ENCODE measurements at regions of chr15 and their contacts with region 1.

Region 1: DNA sequence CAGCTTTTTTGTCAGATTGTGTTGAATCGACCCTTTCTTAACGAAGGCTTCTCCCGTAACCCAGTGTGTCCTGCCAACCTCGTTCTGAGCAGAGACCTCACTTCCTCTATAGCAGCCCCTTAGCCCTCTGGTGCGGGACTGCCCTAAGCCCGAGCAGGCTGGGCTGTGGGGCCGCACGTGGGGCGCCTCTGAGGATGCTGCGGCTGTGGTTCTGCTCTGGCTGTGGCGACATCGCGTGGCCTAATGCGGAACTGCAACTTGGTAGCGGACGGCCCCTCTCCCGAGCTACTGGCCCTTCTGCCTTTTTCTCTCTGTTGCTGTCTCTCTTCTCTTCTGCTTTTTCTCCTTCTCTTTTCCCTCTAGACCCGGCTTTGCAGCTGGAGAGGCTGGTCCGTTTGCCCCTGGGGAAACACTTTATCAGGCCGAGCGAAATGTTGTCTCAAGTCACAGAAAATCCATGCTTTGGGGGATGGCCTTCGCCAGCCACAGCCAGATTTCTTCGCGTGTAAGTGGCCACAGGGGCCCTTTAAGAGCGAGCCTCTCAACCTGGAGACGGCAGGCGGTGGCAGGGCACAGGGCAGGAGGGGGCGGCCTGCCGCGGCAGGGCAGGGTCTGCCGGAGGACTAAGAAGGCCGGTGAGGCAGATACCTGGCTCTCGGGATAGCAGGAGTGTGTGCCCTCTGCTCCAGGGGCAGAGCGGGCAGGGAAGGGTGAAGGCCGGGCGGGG is 19.4 kb upstream of the KIF23 start:
- DNase-seq: peak; percentile 70 to 84
- H3K4me3 ChIP-seq: no peak overlapping the region
- H3K27ac ChIP-seq: no peak overlapping the region
- H3K4me1 ChIP-seq: peaks cover 0 to 10% (median 5%) of the 10 kb centered on the region in 4 donors
- H3K27me3 ChIP-seq: no peaks in the 10 kb centered on the region
- CTCF ChIP-seq: peak; percentile 87 to 97

Region 2: DNA sequence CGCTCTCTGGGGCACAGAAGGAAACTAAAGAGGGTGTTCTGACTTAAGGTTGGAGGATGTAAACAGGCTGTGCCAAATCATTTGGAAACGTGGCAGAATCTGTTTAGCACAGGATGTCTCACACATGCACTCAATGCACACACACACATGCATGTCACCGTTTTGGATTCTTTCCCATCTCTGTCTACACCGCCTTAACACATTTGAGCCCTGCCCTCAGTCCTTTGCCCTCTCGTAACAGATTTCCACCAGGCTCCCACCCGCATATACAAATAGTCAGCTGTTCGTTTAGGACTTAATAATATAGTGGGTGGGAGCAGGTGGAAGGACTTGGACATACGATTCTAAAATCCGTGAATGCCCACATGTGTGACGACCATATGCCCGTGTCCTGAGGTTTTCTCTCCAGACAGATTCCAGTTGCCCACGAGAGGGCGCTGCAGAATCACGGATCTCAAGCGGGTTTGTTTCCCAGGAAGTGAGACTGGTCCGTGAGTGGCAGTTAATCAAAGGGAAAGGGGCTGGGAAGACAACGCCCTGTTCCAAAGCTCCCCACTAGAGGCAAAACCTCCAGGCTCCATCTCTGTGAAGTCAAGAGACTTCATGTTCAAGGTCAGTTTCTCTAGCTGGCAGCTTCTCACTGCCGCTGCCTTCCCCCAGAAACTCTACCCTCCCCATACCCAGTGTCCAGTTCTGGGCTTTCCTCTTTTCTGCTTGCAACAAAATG is 335.7 kb before region 1 on chr15:
- intact Hi-C with region 1: loop called (anchors 2 kb)
- DNase-seq: peak; percentile 81 to 87
- H3K4me3 ChIP-seq: no peak overlapping the region
- H3K27ac ChIP-seq: no peak overlapping the region
- H3K4me1 ChIP-seq: no peaks in the 10 kb centered on the region
- H3K27me3 ChIP-seq: peaks cover 0 to 26% of the 10 kb centered on the region in 2 donors
- CTCF ChIP-seq: peak; percentile 82 to 88

Region 3: DNA sequence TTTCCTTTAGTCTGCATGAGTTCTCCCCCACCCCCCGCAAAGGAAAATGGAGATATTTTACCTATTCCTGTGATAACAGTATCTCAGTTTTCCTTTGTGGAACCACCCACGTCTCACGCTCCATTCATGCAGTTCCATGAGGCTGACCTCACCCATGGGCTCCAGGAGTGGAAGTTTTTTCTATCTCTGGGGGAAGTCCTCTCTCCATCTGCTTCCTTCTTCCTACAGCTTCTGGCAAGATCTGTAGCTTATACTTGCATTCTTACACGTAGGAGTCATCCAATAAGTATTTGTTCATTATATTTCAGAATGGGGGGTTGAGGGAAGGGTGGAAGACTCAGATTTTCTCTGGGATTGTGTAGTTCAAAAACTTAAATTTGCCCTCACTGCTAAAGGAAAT is 240.0 kb before region 1 on chr15:
- intact Hi-C with region 1: loop called (anchors 10 kb)
- DNase-seq: no peak
- H3K4me3 ChIP-seq: no peak overlapping the region
- H3K27ac ChIP-seq: no peak overlapping the region
- H3K4me1 ChIP-seq: peaks cover 0 to 1% (median 0%) of the 10 kb centered on the region in 4 donors
- H3K27me3 ChIP-seq: peaks cover 0 to 10% of the 10 kb centered on the region in 2 donors
- CTCF ChIP-seq: no peak

Region 4: GRCh38 chr15:69337133-69337532 is 57.6 kb before region 1 on chr15:
- intact Hi-C with region 1: no loop called
- DNase-seq: no peak
- H3K4me3 ChIP-seq: no peak overlapping the region
- H3K27ac ChIP-seq: no peak overlapping the region
- H3K4me1 ChIP-seq: no peaks in the 10 kb centered on the region
- H3K27me3 ChIP-seq: no peaks in the 10 kb centered on the region
- CTCF ChIP-seq: no peak

Region 5: DNA sequence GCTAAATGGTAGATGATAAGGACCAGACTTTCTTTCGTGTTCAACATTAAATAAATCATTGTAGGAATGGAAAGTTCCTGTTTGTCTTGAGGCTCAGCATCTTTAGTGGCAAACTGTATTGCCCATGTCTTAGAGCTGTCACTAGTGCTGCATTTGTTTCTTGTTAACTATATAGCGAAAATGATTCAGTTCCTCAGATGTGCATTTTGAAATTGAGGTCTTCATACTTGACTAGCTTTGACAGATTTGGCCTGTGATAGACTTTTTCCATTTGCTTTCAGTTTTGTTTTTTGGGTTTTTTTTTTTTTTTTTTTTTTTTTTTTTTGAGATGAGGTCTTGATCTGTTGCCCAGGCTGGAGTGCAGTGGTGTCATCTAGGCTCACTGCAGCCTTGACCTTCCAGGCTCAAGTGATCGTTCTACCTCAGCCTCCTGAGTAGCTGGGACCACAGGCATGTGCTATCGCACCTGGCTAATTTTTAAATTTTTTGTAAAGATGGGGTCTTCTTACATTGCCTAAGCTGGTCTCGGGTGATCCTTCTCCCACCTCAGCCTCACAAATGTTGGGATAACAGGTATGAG is 48.4 kb after region 1 on chr15:
- intact Hi-C with region 1: no loop called
- DNase-seq: no peak
- H3K4me3 ChIP-seq: no peak overlapping the region
- H3K27ac ChIP-seq: no peak overlapping the region
- H3K4me1 ChIP-seq: no peaks in the 10 kb centered on the region
- H3K27me3 ChIP-seq: no peaks in the 10 kb centered on the region
- CTCF ChIP-seq: no peak

Measured in tibial artery (tissue), 4 donors.